Caco-2 (cell line): ENCODE measurements at regions of chr6 and their contacts with region 1.

Region 1: GRCh38 chr6:30357678-30358540 is 13.0 kb downstream of the RPP21 start:
- DNase-seq: peak; percentile 40 to 49
- H3K4me3 ChIP-seq: no peak overlapping the region
- H3K4me3 Mint-ChIP-seq: no peak overlapping the region
- H3K27ac Mint-ChIP-seq: no peak overlapping the region
- H3K4me1 ChIP-seq: no peaks in the 10 kb centered on the region
- H3K4me1 Mint-ChIP-seq: no peaks in the 10 kb centered on the region
- H3K27me3 ChIP-seq: no peaks in the 10 kb centered on the region; the same call in 1 of the 2 replicates
- H3K27me3 Mint-ChIP-seq: peaks cover 22% of the 10 kb centered on the region
- CTCF ChIP-seq: peak; percentile 65 to 69

Region 2: DNA sequence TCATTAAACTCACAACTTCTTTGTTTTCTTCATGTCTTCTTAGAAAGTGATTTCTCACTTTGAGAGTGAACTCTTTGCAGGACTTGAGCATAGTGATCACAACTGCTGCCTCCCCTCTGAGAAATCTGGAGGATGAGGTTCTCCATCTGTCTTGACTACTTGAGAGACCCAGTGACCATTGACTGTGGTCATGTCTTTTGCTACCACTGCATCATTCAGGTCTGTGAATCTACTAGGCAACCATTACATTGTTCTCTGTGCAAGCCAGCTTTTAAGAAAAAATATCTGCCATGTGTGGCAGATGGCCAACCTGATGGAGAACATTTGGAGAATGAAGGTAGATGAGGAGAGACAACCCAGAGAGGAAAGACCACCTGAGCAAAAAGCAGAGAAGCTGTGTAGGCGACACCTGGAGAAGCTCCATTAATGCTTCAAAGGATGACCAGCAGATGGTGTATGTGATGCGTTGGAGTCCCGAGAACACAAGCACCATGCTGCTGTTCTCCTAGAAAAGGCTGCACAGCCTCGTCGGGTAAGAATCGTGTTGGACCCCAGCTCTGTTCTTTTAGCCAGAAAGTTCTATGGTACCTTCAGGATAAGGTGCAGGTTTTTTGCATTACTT is 119.6 kb before region 1 on chr6:
- CTCF ChIA-PET with region 1: no interaction called
- POLR2A ChIA-PET with region 1: no interaction called
- intact Hi-C with region 1: loop called (anchors 5 kb)
- DNase-seq: peak; percentile 40 to 51
- H3K4me3 ChIP-seq: no peak overlapping the region
- H3K4me3 Mint-ChIP-seq: no peak overlapping the region
- H3K27ac Mint-ChIP-seq: no peak overlapping the region
- H3K4me1 ChIP-seq: no peaks in the 10 kb centered on the region
- H3K4me1 Mint-ChIP-seq: no peaks in the 10 kb centered on the region
- H3K27me3 ChIP-seq: no peaks in the 10 kb centered on the region
- H3K27me3 Mint-ChIP-seq: peaks cover 20% of the 10 kb centered on the region
- CTCF ChIP-seq: peak; percentile 50 to 67